ENCODE measurements at regions of chr17 and their contacts with region 1.

Region 1: GRCh38 chr17:49997791-49998703 is 3.0 kb upstream of the DLX3 start:
- DNase-seq: peak; percentile 88
- ATAC-seq: peak; percentile 86
- H3K4me3 ChIP-seq: no peak overlapping the region
- H3K27ac ChIP-seq: no peak overlapping the region; the same call in 1 of the 2 replicates
- H3K4me1 ChIP-seq: peaks cover 14 to 30% of the 10 kb centered on the region in 2 experiments
- H3K27me3 ChIP-seq: peaks cover 6% of the 10 kb centered on the region; the same call in 1 of the 2 replicates
- CTCF ChIP-seq: peak; percentile 94 to 99 (median 97)
- POLR2A ChIP-seq: no peak
- RAD21 ChIP-seq: peak; percentile 100

Region 2: DNA sequence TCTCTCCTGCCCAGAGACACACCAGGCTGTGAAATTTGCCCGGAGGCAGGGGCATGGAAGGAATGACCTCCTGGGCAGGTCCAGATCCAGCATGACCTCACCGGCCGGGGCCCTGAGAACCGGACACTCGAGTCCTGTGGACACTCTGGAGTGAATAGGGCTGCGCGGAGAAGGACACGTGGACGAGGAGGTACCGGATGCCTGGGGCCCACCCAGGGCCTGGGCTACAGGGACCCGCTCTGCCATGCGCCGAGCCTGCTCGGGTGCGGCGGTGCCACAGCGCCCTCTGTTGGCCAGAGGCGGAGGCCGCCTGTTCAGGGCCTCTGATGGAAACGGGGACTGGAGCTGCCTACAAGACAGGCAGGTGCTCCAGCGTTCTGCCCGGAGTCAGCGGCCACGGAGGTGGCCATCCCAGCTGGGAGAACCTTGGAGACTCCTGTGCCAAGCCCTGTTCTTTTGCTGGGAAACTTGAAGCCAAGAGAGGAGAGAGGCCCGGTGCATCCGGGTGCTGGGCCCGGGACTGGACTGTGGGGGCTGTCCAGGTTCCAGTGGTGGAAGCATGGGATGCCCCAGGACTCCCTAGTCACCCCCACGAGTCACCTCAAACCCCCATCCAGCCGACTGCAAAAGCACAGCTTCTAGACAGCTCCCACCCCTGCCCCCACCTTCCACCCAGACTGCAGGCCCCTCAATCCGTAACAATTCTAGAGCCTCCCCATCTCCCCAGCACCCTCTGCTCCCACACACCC is 441.6 kb before region 1 on chr17:
- CTCF ChIA-PET with region 1: interaction called, 53 read pairs
- POLR2A ChIA-PET with region 1: interaction called, 3 read pairs
- RAD21 ChIA-PET with region 1: no interaction called
- intact Hi-C with region 1: no loop called
- DNase-seq: peak; percentile 49
- ATAC-seq: peak; percentile 94
- H3K4me3 ChIP-seq: no peak overlapping the region
- H3K27ac ChIP-seq: no peak overlapping the region; the same call in 1 of the 2 replicates
- H3K4me1 ChIP-seq: peaks cover 0 to 17% of the 10 kb centered on the region in 2 experiments; a peak in 1 of 4 replicates
- H3K27me3 ChIP-seq: no peaks in the 10 kb centered on the region
- CTCF ChIP-seq: peak; percentile 98 to 100 (median 100)
- POLR2A ChIP-seq: peak; percentile 21
- RAD21 ChIP-seq: peak; percentile 100

Region 3: GRCh38 chr17:49707608-49708514 is 290.2 kb before region 1 on chr17 and contains the start of gene SLC35B1:
- CTCF ChIA-PET with region 1: interaction called, 63 read pairs
- POLR2A ChIA-PET with region 1: interaction called, 10 read pairs
- RAD21 ChIA-PET with region 1: interaction called, 3 to 8 read pairs
- intact Hi-C with region 1: loop called (anchors 1 kb)
- DNase-seq: peak; percentile 100
- ATAC-seq: peak; percentile 93
- H3K4me3 ChIP-seq: peak within 1 kb of the TSS; percentile 85 to 92
- H3K27ac ChIP-seq: peak within 1 kb of the TSS; percentile 77
- H3K4me1 ChIP-seq: peaks cover 16 to 21% of the 10 kb centered on the region in 2 experiments
- H3K27me3 ChIP-seq: no peaks in the 10 kb centered on the region
- CTCF ChIP-seq: peak; percentile 96 to 99 (median 98)
- POLR2A ChIP-seq: no peak
- RAD21 ChIP-seq: peak; percentile 74
- total RNA-seq, gene SLC35B1: 87.5 TPM

Region 4: GRCh38 chr17:49861150-49861892 is 136.7 kb before region 1 on chr17:
- CTCF ChIA-PET with region 1: interaction called, 196 read pairs
- POLR2A ChIA-PET with region 1: interaction called, 17 read pairs
- RAD21 ChIA-PET with region 1: interaction called, 29 to 36 read pairs
- intact Hi-C with region 1: loop called (anchors 1 kb)
- DNase-seq: no peak
- ATAC-seq: peak; percentile 78
- H3K4me3 ChIP-seq: no peak overlapping the region
- H3K27ac ChIP-seq: no peak overlapping the region
- H3K4me1 ChIP-seq: peaks cover 0 to 12% of the 10 kb centered on the region in 2 experiments; a peak in 3 of 4 replicates
- H3K27me3 ChIP-seq: no peaks in the 10 kb centered on the region
- CTCF ChIP-seq: peak; percentile 90 to 100 (median 98)
- POLR2A ChIP-seq: no peak
- RAD21 ChIP-seq: peak; percentile 100

Region 5: GRCh38 chr17:49899191-49899485 is 98.9 kb before region 1 on chr17:
- CTCF ChIA-PET with region 1: interaction called, 100 read pairs
- POLR2A ChIA-PET with region 1: interaction called, 4 read pairs
- RAD21 ChIA-PET with region 1: interaction called, 13 to 27 read pairs
- intact Hi-C with region 1: loop called (anchors 1 kb)
- DNase-seq: peak; percentile 48
- ATAC-seq: peak; percentile 73
- H3K4me3 ChIP-seq: no peak overlapping the region
- H3K27ac ChIP-seq: no peak overlapping the region
- H3K4me1 ChIP-seq: peaks cover 28 to 40% of the 10 kb centered on the region in 2 experiments
- H3K27me3 ChIP-seq: peaks cover 7% of the 10 kb centered on the region; the same call in 1 of the 2 replicates
- CTCF ChIP-seq: peak; percentile 58 to 71 (median 62)
- POLR2A ChIP-seq: no peak
- RAD21 ChIP-seq: peak; percentile 85

Region 6: GRCh38 chr17:49987681-49988441 is 10.2 kb before region 1 on chr17:
- CTCF ChIA-PET with region 1: interaction called, 34 read pairs
- POLR2A ChIA-PET with region 1: no interaction called
- RAD21 ChIA-PET with region 1: interaction called in 1 of 2 experiments, 5 read pairs
- intact Hi-C with region 1: no loop called
- DNase-seq: no peak
- ATAC-seq: peak; percentile 48
- H3K4me3 ChIP-seq: no peak overlapping the region
- H3K27ac ChIP-seq: no peak overlapping the region
- H3K4me1 ChIP-seq: peaks cover 4 to 9% of the 10 kb centered on the region in 2 experiments; a peak in 2 of 4 replicates
- H3K27me3 ChIP-seq: peaks cover 12% of the 10 kb centered on the region; the same call in 1 of the 2 replicates
- CTCF ChIP-seq: no peak
- POLR2A ChIP-seq: no peak
- RAD21 ChIP-seq: no peak

Region 7: DNA sequence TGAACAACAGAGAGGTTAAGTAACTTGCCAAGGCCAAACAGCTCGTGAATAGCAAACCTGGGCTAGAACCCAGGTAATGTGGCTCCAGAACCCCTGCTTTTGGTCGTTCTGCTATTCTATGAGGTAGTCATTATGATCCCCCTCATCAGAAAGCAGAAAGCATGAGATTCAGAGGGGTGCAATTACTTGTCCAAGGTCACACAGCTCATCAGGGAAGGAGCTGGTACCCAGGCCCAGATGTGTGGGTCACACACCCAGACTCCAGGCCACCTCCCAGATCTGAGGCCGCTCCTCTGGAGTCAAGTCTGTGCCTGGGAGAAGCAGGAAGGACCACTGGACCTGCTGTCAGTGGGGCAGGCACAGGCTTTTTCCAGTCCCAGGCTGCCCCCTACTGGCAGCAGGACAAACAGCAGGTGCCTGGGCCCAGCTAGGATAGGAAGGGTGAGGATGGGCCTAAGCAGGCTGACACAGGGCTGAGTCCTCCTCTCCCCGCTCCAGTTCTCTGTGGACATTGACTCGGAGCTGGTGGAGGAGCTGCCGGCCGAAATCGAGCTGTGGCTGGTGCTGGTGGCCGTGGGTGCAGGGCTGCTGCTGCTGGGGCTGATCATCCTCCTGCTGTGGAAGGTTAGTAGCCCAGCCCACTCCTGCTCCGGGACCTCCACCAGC is 89.3 kb after region 1 on chr17:
- CTCF ChIA-PET with region 1: interaction called, 32 read pairs
- POLR2A ChIA-PET with region 1: interaction called, 3 read pairs
- RAD21 ChIA-PET with region 1: interaction called, 5 to 10 read pairs
- intact Hi-C with region 1: no loop called
- DNase-seq: peak; percentile 57
- ATAC-seq: peak; percentile 93
- H3K4me3 ChIP-seq: no peak overlapping the region
- H3K27ac ChIP-seq: no peak overlapping the region; the same call in 1 of the 2 replicates
- H3K4me1 ChIP-seq: peaks cover 0 to 4% of the 10 kb centered on the region in 2 experiments; a peak in 2 of 4 replicates
- H3K27me3 ChIP-seq: no peaks in the 10 kb centered on the region
- CTCF ChIP-seq: peak; percentile 92 to 100 (median 99)
- POLR2A ChIP-seq: no peak
- RAD21 ChIP-seq: peak; percentile 98

Measured in HCT116 (cell line).